Activated CD4-positive, alpha-beta memory T cell treated with anti-CD3 and anti-CD28 coated beads for 36 hours (primary cell): ENCODE measurements at regions of chr12 and their contacts with region 1.

Region 1: DNA sequence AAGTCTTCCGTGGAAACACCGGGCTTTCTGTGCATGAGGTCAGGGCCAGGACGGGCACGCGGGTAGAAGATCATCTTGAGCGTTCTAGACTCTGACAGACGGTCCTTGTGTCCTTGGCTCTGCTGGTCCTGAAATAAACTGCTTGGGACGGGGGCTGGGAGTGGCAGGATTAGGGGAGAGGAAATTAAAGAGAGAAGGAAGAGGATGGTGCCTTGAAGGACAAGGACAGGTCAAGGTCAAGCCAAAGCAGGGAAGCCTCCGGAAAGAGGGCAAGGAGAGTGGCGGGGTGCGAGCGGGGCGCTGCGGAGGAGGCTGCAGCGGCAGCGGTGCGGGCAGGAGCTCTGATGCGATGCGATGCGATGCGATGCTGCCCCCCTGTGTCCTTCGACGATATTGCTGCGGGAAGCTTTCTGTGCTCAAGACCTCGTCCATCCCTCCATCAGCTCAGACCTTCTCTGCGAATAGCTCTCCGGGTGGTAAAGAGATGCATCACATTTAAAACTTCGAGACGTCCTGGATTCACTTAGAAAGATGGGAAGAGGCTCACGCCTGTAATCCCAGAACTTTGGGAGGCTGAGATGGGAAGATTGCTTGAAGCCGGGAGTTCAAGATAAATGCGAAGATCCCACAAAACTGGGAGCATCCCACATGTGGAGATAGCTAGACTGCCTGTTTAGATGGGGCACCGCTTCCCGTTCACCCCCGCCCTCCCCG is 110.1 kb upstream of the TMEM132D start:
- DNase-seq: peak; percentile 59
- H3K4me3 Mint-ChIP-seq: no peak overlapping the region
- H3K27ac Mint-ChIP-seq: no peak overlapping the region
- H3K4me1 Mint-ChIP-seq: no peaks in the 10 kb centered on the region
- H3K27me3 Mint-ChIP-seq: peaks cover 11% of the 10 kb centered on the region

Region 2: GRCh38 chr12:129193263-129193871 is 820.6 kb before region 1 on chr12:
- CTCF ChIA-PET with region 1: no interaction called
- POLR2A ChIA-PET with region 1: no interaction called
- intact Hi-C with region 1: loop called (anchors 5 kb)
- DNase-seq: peak; percentile 16
- H3K4me3 Mint-ChIP-seq: no peak overlapping the region
- H3K27ac Mint-ChIP-seq: no peak overlapping the region
- H3K4me1 Mint-ChIP-seq: no peaks in the 10 kb centered on the region
- H3K27me3 Mint-ChIP-seq: no peaks in the 10 kb centered on the region

Region 3: GRCh38 chr12:130026608-130027176 is 12.8 kb after region 1 on chr12:
- CTCF ChIA-PET with region 1: interaction called, 11 read pairs
- POLR2A ChIA-PET with region 1: no interaction called
- intact Hi-C with region 1: no loop called
- DNase-seq: peak; percentile 42
- H3K4me3 Mint-ChIP-seq: no peak overlapping the region
- H3K27ac Mint-ChIP-seq: no peak overlapping the region
- H3K4me1 Mint-ChIP-seq: no peaks in the 10 kb centered on the region
- H3K27me3 Mint-ChIP-seq: peaks cover 4% of the 10 kb centered on the region

Region 4: GRCh38 chr12:130162267-130162666 is 148.3 kb after region 1 on chr12 and contains the start of gene FZD10:
- CTCF ChIA-PET with region 1: no interaction called
- POLR2A ChIA-PET with region 1: no interaction called
- intact Hi-C with region 1: no loop called
- DNase-seq: peak; percentile 22
- H3K4me3 Mint-ChIP-seq: peak within 1 kb of the TSS; percentile 51
- H3K27ac Mint-ChIP-seq: no peak within 1 kb of the TSS
- H3K4me1 Mint-ChIP-seq: peaks cover 2% of the 10 kb centered on the region
- H3K27me3 Mint-ChIP-seq: peaks cover 37% of the 10 kb centered on the region
- total RNA-seq, gene FZD10: not detected